ENCODE measurements at regions of chr12 and their contacts with region 1.

Region 1: GRCh38 chr12:93766796-93767523 is 89.8 kb downstream of the CRADD start:
- DNase-seq: peak; percentile 68
- ATAC-seq: peak; percentile 82
- H3K4me3 Mint-ChIP-seq: no peak overlapping the region
- H3K27ac Mint-ChIP-seq: peak overlapping the region; percentile 40
- H3K4me1 Mint-ChIP-seq: peaks cover 41% of the 10 kb centered on the region
- H3K27me3 Mint-ChIP-seq: no peaks in the 10 kb centered on the region

Region 2: DNA sequence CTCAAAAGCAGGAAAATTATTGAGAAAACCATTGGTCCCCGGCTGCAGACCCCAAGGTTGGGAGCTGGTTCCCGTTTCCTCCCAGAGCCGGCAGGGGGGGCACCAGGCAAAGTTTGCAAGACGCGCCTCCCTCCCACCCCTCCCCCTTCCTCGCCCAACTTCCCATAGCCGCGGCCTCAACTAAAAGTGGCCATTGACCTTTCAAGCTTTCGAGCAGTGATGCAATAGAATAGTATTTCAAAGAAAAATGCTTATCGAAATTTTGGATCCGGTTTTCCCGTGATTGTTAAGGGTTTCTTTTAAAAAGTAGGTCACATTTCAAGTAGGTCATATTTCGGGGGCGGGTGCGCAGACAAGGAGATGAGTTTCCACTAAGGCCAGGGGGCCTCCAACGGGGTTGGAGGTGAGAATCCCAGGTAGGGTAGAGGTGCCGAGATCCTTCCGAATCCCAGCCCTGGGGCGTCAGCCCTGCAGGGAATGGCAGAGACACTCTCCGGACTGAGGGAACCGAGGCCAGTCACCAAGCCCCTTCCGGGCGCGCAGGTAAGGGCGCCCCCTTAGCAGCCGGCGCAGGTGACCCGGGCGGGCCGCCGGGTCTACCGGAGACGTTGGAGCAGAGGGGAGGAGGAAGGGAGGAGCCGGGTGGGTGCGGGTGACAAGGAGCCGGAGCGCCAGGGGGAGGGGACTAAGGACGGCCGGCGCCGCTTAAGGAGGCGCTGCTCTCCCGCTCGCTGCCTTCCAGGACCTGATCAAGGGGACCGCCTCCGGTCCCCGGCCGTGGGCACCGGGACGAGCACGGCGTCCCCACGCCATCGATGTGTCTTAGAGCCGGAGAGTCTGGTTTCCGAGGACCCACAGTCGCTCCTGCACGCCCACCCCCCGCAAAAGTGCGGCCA is 197.1 kb before region 1 on chr12:
- CTCF ChIA-PET with region 1: interaction called, 20 read pairs
- POLR2A ChIA-PET with region 1: interaction called, 3 read pairs
- DNase-seq: peak; percentile 87
- ATAC-seq: peak; percentile 62
- H3K4me3 Mint-ChIP-seq: peak overlapping the region; percentile 91
- H3K27ac Mint-ChIP-seq: peak overlapping the region; percentile 90
- H3K4me1 Mint-ChIP-seq: peaks cover 37% of the 10 kb centered on the region
- H3K27me3 Mint-ChIP-seq: peaks cover 7% of the 10 kb centered on the region

Region 3: DNA sequence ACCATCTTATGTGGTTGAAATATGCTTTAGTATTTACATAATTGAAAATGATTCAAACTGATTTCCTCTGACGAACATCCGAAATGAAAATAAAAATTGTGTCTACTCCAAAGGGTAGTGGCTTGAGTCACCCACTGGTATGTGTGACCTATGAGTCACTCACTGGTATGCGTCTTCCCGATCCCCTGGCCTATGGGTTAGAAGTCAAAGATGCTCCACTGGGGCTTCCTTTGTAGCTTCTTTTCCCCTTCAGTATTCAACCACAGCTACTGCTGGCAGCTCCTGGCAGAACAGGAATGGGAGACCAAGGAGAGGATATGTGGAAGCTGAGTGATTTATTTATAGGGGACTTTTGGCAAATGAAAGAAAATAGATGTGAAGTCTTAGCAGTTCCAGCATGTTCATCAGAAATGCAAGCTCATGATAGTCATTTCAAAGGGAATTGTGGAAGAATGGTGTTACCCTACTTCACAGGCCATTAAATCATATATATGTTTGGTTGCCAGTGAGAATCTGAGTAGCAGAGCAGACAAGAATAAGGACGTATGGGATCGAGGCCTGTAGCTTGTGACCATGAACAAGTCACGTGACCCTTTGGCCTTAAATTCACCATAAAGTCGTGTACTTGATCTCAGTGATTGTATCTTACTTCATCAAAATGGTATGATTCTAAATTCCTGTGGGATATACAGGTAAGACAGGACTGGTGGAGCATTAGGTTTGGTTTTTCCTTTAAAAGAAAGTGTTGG is 18.5 kb after region 1 on chr12:
- CTCF ChIA-PET with region 1: interaction called, 23 read pairs
- POLR2A ChIA-PET with region 1: no interaction called
- DNase-seq: peak; percentile 60
- ATAC-seq: peak; percentile 75
- H3K4me3 Mint-ChIP-seq: peak overlapping the region; percentile 17
- H3K27ac Mint-ChIP-seq: peak overlapping the region; percentile 53
- H3K4me1 Mint-ChIP-seq: peaks cover 62% of the 10 kb centered on the region
- H3K27me3 Mint-ChIP-seq: no peaks in the 10 kb centered on the region

Region 4: DNA sequence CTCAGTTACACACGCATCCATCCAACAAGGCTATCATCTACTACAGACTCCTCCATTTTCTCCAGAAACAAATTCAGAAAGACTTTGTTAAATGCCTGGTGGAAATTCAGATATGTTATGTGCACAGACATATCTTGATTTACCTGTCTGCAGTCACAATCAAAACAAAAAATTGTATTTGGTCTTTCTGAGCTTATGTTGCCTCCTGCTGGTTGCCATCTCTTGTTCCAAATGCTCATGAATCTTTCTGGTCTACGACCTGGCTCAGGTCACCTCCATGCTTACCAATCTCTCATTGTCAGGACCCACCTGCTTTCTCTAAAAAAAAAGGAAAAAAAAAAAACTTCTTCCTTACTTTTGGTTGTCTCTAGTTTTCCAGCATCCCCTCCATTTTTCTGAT is 212.2 kb after region 1 on chr12:
- CTCF ChIA-PET with region 1: interaction called, 73 read pairs
- POLR2A ChIA-PET with region 1: no interaction called
- DNase-seq: peak; percentile 50
- ATAC-seq: no peak
- H3K4me3 Mint-ChIP-seq: no peak overlapping the region
- H3K27ac Mint-ChIP-seq: no peak overlapping the region
- H3K4me1 Mint-ChIP-seq: peaks cover 31% of the 10 kb centered on the region
- H3K27me3 Mint-ChIP-seq: peaks cover 5% of the 10 kb centered on the region

Region 5: DNA sequence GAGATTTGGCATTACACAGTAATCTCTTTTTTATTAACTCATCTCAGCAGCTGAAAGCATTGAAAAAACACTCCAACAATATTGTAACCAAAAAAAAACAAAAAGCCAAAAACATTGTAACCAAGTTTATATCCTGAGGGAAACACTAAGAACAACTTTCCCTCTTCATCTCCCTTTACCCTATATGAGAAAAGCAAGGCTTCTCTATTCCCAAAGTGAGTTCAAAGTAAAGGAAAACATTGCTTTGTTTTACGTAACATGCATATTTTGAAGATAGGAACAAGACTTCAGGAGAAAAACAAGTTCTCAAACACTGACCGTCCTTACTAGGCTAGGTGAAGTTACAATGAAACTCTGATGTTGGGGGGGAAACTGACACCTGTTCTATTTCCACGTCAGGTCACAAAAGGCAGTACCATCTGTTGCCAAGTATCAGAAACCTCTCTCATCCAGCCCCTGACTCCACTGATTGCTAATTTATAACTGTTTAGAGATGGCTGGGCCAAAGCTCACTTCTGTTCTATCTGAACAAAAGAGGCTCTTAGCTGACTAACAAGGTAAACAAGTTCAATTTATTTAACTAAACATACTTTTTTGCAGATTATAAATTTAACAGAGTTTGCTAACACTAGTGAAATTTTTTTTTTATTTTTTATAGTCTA is 313.5 kb after region 1 on chr12:
- CTCF ChIA-PET with region 1: interaction called, 16 read pairs
- POLR2A ChIA-PET with region 1: no interaction called
- DNase-seq: no peak
- ATAC-seq: no peak
- H3K4me3 Mint-ChIP-seq: no peak overlapping the region
- H3K27ac Mint-ChIP-seq: no peak overlapping the region
- H3K4me1 Mint-ChIP-seq: peaks cover 9% of the 10 kb centered on the region
- H3K27me3 Mint-ChIP-seq: peaks cover 14% of the 10 kb centered on the region